A549 (cell line): ENCODE measurements at regions of chr20 and their contacts with region 1.

Region 1: DNA sequence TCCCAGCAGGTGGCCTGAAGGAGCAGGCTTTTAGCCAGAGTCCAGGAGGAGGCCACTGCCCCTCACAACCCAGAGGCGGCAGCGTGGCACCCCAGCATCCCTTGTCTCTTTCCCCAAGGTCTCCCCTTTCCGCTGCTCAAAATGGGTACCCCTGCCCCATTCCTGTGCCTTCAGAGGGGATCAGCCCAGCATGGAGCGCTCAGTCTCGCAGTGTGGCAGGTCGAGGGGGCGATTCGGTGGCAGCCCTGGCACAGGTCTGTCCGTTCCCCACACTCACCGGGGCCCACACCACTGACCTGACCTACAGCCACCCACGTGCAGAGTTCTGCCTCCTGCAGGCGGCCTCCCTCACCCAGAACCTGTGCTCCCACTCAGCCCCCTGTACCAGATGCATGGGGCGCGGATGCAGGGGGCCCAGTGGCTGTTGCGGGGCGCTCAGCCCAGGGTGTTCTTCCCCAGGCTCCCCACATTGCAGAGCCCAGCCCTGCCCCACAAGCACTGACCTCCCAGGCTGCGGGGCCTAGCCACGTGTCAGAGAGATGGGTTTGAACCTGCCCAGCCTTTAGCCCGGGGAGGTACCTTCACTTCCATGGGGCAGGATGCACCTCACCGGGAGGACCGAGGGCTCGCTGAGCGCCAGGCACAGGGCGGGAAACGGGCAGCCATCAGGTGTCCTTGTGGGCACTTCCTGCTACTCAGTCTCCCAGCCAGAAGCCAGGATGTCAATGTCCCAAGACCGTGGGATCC is 41.8 kb downstream of the DSTN start:
- DNase-seq: peak in 1 of 2 experiments; percentile 31
- ATAC-seq: peak; percentile 20 to 25
- H3K4me3 ChIP-seq: no peak overlapping the region
- H3K27ac ChIP-seq: peak overlapping the region in 1 of 2 experiments; percentile 66; a peak in 3 of 6 replicates
- H3K4me1 ChIP-seq: peaks cover 14% of the 10 kb centered on the region; the same call in 2 of the 3 replicates
- CTCF ChIP-seq: peak; percentile 36
- EP300 ChIP-seq: no peak
- POLR2A ChIP-seq: no peak
- RAD21 ChIP-seq: peak; percentile 36 to 44; a peak in 3 of 5 replicates

Region 2: GRCh38 chr20:17530716-17531664 is 80.7 kb before region 1 on chr20 and contains the start of gene BFSP1:
- CTCF ChIA-PET with region 1: interaction called, 501 read pairs
- POLR2A ChIA-PET with region 1: interaction called, 5 read pairs
- DNase-seq: peak; percentile 58 to 79
- ATAC-seq: peak; percentile 81 to 86
- H3K4me3 ChIP-seq: peak within 1 kb of the TSS; percentile 55
- H3K27ac ChIP-seq: peak within 1 kb of the TSS; percentile 86 to 95
- H3K4me1 ChIP-seq: peaks cover 21% of the 10 kb centered on the region
- CTCF ChIP-seq: peak; percentile 12; the same call in 1 of the 3 replicates
- EP300 ChIP-seq: no peak
- POLR2A ChIP-seq: peak; percentile 43
- RAD21 ChIP-seq: no peak
- polyA plus RNA-seq, gene BFSP1: 6.1 and 7.2 TPM in 2 replicates

Region 3: DNA sequence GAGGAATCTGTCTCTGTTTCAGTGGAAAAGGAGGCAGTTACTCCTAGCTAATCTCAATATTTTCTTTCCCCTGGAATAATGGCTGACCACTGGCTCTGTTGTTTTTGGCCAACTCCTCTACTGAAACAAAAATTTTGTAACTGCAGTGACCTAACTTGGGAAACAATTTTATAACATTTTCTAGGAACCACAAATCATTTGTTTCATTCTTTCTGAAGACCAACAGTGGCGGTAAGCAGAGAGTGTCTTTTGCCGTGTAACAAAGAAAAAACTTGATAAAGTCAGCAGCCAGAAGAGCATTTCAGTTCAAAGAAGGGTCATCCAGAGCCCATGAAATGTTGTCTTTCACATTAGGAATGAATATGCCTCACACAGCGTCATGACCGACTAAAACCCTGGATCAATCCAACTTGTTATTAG is 68.7 kb before region 1 on chr20:
- CTCF ChIA-PET with region 1: interaction called, 501 read pairs
- POLR2A ChIA-PET with region 1: no interaction called
- DNase-seq: no peak
- ATAC-seq: no peak
- H3K4me3 ChIP-seq: no peak overlapping the region
- H3K27ac ChIP-seq: 0 out of 6 replicates have a peak overlapping the region, but pooled peaks of 1 of the 2 experiments have one; percentile 1
- H3K4me1 ChIP-seq: peaks cover 25% of the 10 kb centered on the region
- CTCF ChIP-seq: no peak
- EP300 ChIP-seq: no peak
- POLR2A ChIP-seq: no peak
- RAD21 ChIP-seq: no peak